ENCODE measurements at regions of chr9 and their contacts with region 1.

Region 1: DNA sequence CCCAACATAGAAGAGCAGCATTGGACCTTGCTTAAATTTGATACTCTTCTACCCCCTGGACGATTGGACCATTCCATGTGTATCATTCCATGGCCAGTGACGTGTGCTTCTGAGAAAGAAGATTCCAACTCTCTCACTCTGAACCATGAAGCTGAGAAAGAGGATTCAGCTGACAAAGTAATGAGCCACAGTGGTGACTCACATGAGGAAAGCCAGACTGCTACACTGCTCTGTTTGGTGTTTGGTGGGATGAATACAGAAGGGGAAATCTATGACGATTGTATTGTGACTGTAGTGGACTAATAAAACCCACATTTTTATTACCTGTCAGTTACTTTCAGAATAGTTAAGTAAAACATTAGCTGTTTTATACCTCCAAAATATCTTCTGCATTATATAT is 7.5 kb downstream of the HSPA5 start:
- DNase-seq: peak in 5 of 7 donors; percentile 24 to 47 (median 34)
- H3K4me3 ChIP-seq: no peak overlapping the region
- H3K27ac ChIP-seq: peak overlapping the region in 3 of 5 donors; percentile 10 to 16 (median 10)
- H3K4me1 ChIP-seq: peaks cover 14 to 41% of the 10 kb centered on the region in 2 donors
- H3K27me3 ChIP-seq: no peaks in the 10 kb centered on the region
- CTCF ChIP-seq: no peak
- POLR2A ChIP-seq: no peak

Region 2: GRCh38 chr9:125293134-125293533 is 59.5 kb after region 1 on chr9:
- intact Hi-C with region 1: no loop called
- DNase-seq: no peak
- H3K4me3 ChIP-seq: no peak overlapping the region
- H3K27ac ChIP-seq: no peak overlapping the region
- H3K4me1 ChIP-seq: peaks cover 0 to 10% of the 10 kb centered on the region in 2 donors
- H3K27me3 ChIP-seq: no peaks in the 10 kb centered on the region
- CTCF ChIP-seq: no peak
- POLR2A ChIP-seq: no peak

Region 3: DNA sequence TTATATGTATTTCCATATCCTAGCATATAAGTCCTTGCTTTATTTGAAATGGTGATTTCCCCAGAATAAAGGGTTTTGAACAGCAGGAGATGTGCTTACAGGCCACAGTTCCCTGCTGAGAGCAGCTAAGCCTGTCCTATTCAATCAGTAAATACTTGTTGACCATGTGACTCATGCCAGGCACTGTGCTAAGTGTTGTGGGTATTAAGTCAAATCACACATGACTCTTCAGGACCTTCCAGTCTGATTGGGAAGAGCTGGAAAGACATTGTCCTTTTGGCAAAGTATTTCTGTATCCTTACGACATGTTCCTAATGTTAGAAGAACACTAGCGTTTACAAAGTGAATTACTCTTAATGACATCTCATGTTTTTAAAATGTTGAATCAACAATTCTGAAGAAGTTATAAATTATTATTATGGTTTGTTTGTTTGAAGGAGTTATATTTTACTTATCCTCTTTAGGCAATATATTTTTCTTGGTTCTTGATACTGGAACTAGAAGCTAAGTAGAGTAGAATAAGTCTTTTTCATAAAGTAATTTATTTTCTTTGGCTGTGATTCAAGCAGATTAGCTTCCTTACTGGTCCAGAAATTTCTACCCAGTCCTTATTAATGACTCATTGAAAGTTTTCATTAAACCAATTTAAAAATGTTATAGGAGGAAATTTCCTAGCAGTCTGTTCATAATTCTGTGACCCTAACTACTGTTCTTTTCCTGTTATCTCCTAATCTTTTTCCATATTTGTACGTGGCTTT is 110.0 kb after region 1 on chr9:
- intact Hi-C with region 1: loop called in 1 of 2 experiments (anchors 10 kb)
- DNase-seq: peak in 4 of 7 donors; percentile 11 to 27 (median 21)
- H3K4me3 ChIP-seq: no peak overlapping the region
- H3K27ac ChIP-seq: peak overlapping the region in 1 of 5 donors; percentile 2
- H3K4me1 ChIP-seq: peaks cover 0 to 10% of the 10 kb centered on the region in 2 donors
- H3K27me3 ChIP-seq: no peaks in the 10 kb centered on the region
- CTCF ChIP-seq: no peak
- POLR2A ChIP-seq: no peak